PC-9 (cell line): ENCODE measurements at regions of chr2 and their contacts with region 1.

Region 1: GRCh38 chr2:3959372-3959771 is 256.0 kb downstream of the DCDC2C start:
- DNase-seq: peak in 1 of 2 experiments; percentile 56
- H3K4me3 ChIP-seq: no peak overlapping the region
- H3K27ac ChIP-seq: no peak overlapping the region
- H3K4me1 ChIP-seq: no peaks in the 10 kb centered on the region
- H3K27me3 ChIP-seq: peaks cover 30% of the 10 kb centered on the region
- CTCF ChIP-seq: peak; percentile 85

Region 2: DNA sequence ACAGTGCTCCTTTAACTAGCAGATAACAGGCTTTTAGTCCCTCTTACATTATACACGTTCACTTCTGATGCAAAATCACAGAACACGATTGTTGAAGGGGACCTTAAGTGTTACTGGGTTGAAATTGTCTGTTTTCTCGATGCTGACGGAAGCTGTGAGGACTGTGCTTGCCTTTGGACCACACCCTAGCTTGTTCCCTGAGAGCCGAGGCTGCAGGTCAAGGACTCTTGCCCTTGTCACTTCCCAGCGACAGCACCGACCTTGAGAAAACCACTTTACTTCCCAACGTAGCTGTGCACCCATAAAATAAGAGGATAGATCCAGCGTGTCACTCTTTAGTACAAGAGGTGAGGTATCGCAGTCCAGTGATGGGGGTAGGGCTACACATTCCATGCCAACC is 445.0 kb after region 1 on chr2:
- CTCF ChIA-PET with region 1: no interaction called
- POLR2A ChIA-PET with region 1: no interaction called
- intact Hi-C with region 1: no loop called
- DNase-seq: no peak
- H3K4me3 ChIP-seq: no peak overlapping the region
- H3K27ac ChIP-seq: no peak overlapping the region
- H3K4me1 ChIP-seq: no peaks in the 10 kb centered on the region
- H3K27me3 ChIP-seq: no peaks in the 10 kb centered on the region
- CTCF ChIP-seq: no peak

Region 3: GRCh38 chr2:5365871-5366461 is 1406.6 kb after region 1 on chr2:
- CTCF ChIA-PET with region 1: no interaction called
- POLR2A ChIA-PET with region 1: no interaction called
- intact Hi-C with region 1: loop called (anchors 2 kb)
- DNase-seq: peak; percentile 38 to 41
- H3K4me3 ChIP-seq: no peak overlapping the region
- H3K27ac ChIP-seq: no peak overlapping the region
- H3K4me1 ChIP-seq: no peaks in the 10 kb centered on the region
- H3K27me3 ChIP-seq: peaks cover 12% of the 10 kb centered on the region
- CTCF ChIP-seq: peak; percentile 87

Region 4: GRCh38 chr2:5915881-5916310 is 1956.5 kb after region 1 on chr2:
- CTCF ChIA-PET with region 1: interaction called, 6 read pairs
- POLR2A ChIA-PET with region 1: no interaction called
- intact Hi-C with region 1: loop called (anchors 5 kb)
- DNase-seq: peak in 1 of 2 experiments; percentile 3
- H3K4me3 ChIP-seq: no peak overlapping the region
- H3K27ac ChIP-seq: no peak overlapping the region
- H3K4me1 ChIP-seq: no peaks in the 10 kb centered on the region
- H3K27me3 ChIP-seq: no peaks in the 10 kb centered on the region
- CTCF ChIP-seq: peak; percentile 64